Left ventricle myocardium inferior (tissue), 1 donor: ENCODE measurements at regions of chr9 and their contacts with region 1.

Region 1: DNA sequence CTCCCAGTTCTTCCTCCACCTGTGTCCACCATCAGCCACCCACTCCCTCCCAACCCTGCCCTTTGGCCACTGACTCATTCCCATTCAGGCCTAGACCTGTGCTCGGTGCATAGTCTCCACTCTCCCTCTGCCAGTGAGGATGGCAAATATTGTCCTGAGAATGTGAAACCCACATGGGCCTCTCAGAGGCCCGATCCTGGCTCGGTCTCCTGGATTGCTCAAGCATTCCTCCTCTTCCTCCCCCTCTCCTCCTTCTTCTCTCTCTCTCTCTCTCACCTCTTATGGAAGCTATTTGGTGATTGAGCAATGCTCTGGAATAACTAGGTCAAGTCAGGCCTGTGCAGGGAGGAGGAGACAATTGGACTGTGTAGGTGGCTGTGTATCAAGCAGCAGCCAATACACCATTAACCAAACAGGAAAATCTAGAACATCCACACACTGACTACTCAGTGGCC is 99.9 kb downstream of the KLF4 start:
- DNase-seq: peak; percentile 44
- H3K4me3 ChIP-seq: no peak overlapping the region
- H3K27ac ChIP-seq: peak overlapping the region; percentile 76
- H3K4me1 ChIP-seq: peaks cover 52% of the 10 kb centered on the region
- H3K27me3 ChIP-seq: no peaks in the 10 kb centered on the region
- CTCF ChIP-seq: no peak

Region 2: DNA sequence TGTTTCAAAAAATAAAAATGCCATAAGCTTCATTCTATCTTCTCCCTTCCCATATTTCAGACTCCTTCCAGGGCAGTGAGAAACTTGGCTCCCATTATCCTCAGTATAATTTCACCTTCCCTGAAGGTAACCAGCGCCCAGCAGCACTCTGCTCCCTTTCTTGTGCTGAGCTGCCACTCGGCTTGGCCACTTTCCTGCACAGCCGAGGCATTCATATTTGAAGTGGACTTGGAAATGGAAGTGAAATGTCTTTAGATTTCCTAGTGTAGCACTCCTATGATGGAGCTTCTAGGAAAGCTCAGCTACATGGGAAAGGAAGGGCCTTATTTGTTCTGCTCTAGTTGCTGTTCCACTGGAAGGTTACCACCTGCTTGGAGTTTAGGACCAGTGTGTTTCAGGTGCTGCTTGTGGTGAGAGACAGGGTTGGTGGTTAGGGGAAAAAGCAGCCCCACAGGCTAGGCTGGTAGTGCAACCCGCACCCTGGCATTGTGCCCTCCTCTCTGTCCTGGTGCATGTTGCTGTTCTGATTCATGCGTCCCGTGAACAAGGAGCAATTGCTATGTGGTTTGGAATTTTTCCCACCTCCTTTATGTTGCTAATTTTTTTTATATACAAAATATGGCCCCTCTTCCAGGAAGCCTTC is 52.8 kb before region 1 on chr9:
- intact Hi-C with region 1: no loop called
- DNase-seq: no peak
- H3K4me3 ChIP-seq: no peak overlapping the region
- H3K27ac ChIP-seq: no peak overlapping the region
- H3K4me1 ChIP-seq: peaks cover 43% of the 10 kb centered on the region
- H3K27me3 ChIP-seq: no peaks in the 10 kb centered on the region
- CTCF ChIP-seq: no peak

Region 3: GRCh38 chr9:107852891-107853290 is 463.2 kb after region 1 on chr9:
- intact Hi-C with region 1: loop called (anchors 5 kb)
- DNase-seq: no peak
- H3K4me3 ChIP-seq: no peak overlapping the region
- H3K27ac ChIP-seq: no peak overlapping the region
- H3K4me1 ChIP-seq: no peaks in the 10 kb centered on the region
- H3K27me3 ChIP-seq: no peaks in the 10 kb centered on the region
- CTCF ChIP-seq: no peak